ENCODE measurements at regions of chr11 and their contacts with region 1.

Region 1: GRCh38 chr11:64448599-64449556 is 89.9 kb downstream of the RPS6KA4 start:
- DNase-seq: peak; percentile 80
- ATAC-seq: peak; percentile 61
- H3K4me3 ChIP-seq: peak overlapping the region; percentile 52 to 92 (median 55)
- H3K4me3 Mint-ChIP-seq: peak overlapping the region; percentile 94
- H3K27ac ChIP-seq: peak overlapping the region; percentile 39 to 83
- H3K27ac Mint-ChIP-seq: peak overlapping the region; percentile 83
- H3K4me1 ChIP-seq: peaks cover 25 to 34% of the 10 kb centered on the region in 2 donors
- H3K4me1 Mint-ChIP-seq: peaks cover 34% of the 10 kb centered on the region
- H3K27me3 ChIP-seq: no peaks in the 10 kb centered on the region
- H3K27me3 Mint-ChIP-seq: no peaks in the 10 kb centered on the region
- CTCF ChIP-seq: peak; percentile 76

Region 2: GRCh38 chr11:63248987-63249386 is 1199.9 kb before region 1 on chr11:
- CTCF ChIA-PET with region 1: no interaction called
- POLR2A ChIA-PET with region 1: no interaction called
- intact Hi-C with region 1: no loop called
- DNase-seq: no peak
- ATAC-seq: no peak
- H3K4me3 ChIP-seq: no peak overlapping the region
- H3K4me3 Mint-ChIP-seq: no peak overlapping the region
- H3K27ac ChIP-seq: no peak overlapping the region
- H3K27ac Mint-ChIP-seq: no peak overlapping the region
- H3K4me1 ChIP-seq: no peaks in the 10 kb centered on the region
- H3K4me1 Mint-ChIP-seq: no peaks in the 10 kb centered on the region
- H3K27me3 ChIP-seq: peaks cover 0 to 10% (median 8%) of the 10 kb centered on the region in 4 experiments
- H3K27me3 Mint-ChIP-seq: peaks cover 42% of the 10 kb centered on the region
- CTCF ChIP-seq: no peak

Region 3: GRCh38 chr11:64358907-64359711 is 89.8 kb before region 1 on chr11 and contains the start of gene RPS6KA4:
- CTCF ChIA-PET with region 1: interaction called, 8 read pairs
- POLR2A ChIA-PET with region 1: no interaction called
- intact Hi-C with region 1: loop called (anchors 5 kb)
- DNase-seq: peak; percentile 68
- ATAC-seq: peak; percentile 72
- H3K4me3 ChIP-seq: peak within 1 kb of the TSS; percentile 26 to 86 (median 75)
- H3K4me3 Mint-ChIP-seq: peak within 1 kb of the TSS; percentile 94
- H3K27ac ChIP-seq: peak within 1 kb of the TSS; percentile 12 to 46
- H3K27ac Mint-ChIP-seq: peak within 1 kb of the TSS; percentile 81
- H3K4me1 ChIP-seq: peaks cover 27 to 51% of the 10 kb centered on the region in 2 donors
- H3K4me1 Mint-ChIP-seq: peaks cover 43% of the 10 kb centered on the region
- H3K27me3 ChIP-seq: no peaks in the 10 kb centered on the region
- H3K27me3 Mint-ChIP-seq: no peaks in the 10 kb centered on the region
- CTCF ChIP-seq: no peak
- total RNA-seq, gene RPS6KA4: 22.6 and 24.2 TPM in 2 replicates

Region 4: GRCh38 chr11:64419818-64420485 is 28.9 kb before region 1 on chr11:
- CTCF ChIA-PET with region 1: interaction called, 14 read pairs
- POLR2A ChIA-PET with region 1: no interaction called
- intact Hi-C with region 1: no loop called
- DNase-seq: no peak
- ATAC-seq: no peak
- H3K4me3 ChIP-seq: no peak overlapping the region
- H3K4me3 Mint-ChIP-seq: no peak overlapping the region
- H3K27ac ChIP-seq: no peak overlapping the region
- H3K27ac Mint-ChIP-seq: no peak overlapping the region
- H3K4me1 ChIP-seq: no peaks in the 10 kb centered on the region
- H3K4me1 Mint-ChIP-seq: peaks cover 2% of the 10 kb centered on the region
- H3K27me3 ChIP-seq: peaks cover 0 to 7% (median 1%) of the 10 kb centered on the region in 4 experiments
- H3K27me3 Mint-ChIP-seq: peaks cover 26% of the 10 kb centered on the region
- CTCF ChIP-seq: no peak

Region 5: DNA sequence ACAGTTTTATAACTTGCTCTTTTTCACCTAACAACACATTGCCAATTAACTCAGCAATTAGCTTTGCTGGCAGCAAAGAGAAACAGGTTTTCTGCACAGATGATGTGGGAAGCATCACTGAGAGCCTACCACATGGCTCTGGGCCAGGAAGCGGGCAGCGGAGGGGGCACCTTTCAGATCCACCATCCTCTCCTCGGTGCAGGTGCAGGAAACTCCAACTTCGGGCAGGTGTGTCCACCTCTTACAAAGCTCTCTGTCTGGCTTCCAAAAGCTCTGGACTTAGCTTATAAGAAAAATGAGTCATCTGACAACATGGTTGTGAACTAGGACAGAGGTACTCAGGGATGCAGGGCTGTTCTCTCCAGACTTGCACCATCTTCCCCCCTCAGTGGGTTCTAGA is 12.9 kb before region 1 on chr11:
- CTCF ChIA-PET with region 1: interaction called, 25 read pairs
- POLR2A ChIA-PET with region 1: no interaction called
- intact Hi-C with region 1: no loop called
- DNase-seq: no peak
- ATAC-seq: no peak
- H3K4me3 ChIP-seq: no peak overlapping the region
- H3K4me3 Mint-ChIP-seq: no peak overlapping the region
- H3K27ac ChIP-seq: no peak overlapping the region
- H3K27ac Mint-ChIP-seq: no peak overlapping the region
- H3K4me1 ChIP-seq: peaks cover 0 to 4% of the 10 kb centered on the region in 2 donors
- H3K4me1 Mint-ChIP-seq: peaks cover 3% of the 10 kb centered on the region
- H3K27me3 ChIP-seq: peaks cover 0 to 7% (median 1%) of the 10 kb centered on the region in 4 experiments
- H3K27me3 Mint-ChIP-seq: peaks cover 20% of the 10 kb centered on the region
- CTCF ChIP-seq: no peak

Region 6: DNA sequence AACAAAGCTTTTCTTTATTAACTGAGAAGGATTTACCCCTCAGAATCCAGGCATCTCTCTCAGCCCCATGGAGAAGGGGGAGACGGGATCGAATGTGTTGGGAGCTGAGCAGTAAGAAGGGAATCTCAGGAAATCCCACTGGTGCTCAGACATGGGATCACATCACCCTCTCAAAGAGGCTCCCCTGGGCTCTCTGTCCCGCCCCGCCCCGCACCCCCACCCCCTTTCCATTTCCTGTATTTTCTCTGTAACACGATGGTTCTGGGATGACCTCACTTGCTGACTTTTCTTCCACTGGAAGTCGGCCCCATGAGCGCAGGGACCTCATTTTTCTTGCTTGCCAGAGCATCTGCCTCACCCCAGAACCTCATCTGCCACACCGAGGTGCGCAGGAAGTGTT is 10.1 kb after region 1 on chr11:
- CTCF ChIA-PET with region 1: interaction called, 10 read pairs
- POLR2A ChIA-PET with region 1: no interaction called
- intact Hi-C with region 1: no loop called
- DNase-seq: no peak
- ATAC-seq: no peak
- H3K4me3 ChIP-seq: no peak overlapping the region
- H3K4me3 Mint-ChIP-seq: no peak overlapping the region
- H3K27ac ChIP-seq: no peak overlapping the region
- H3K27ac Mint-ChIP-seq: no peak overlapping the region
- H3K4me1 ChIP-seq: no peaks in the 10 kb centered on the region
- H3K4me1 Mint-ChIP-seq: no peaks in the 10 kb centered on the region
- H3K27me3 ChIP-seq: no peaks in the 10 kb centered on the region
- H3K27me3 Mint-ChIP-seq: peaks cover 4% of the 10 kb centered on the region
- CTCF ChIP-seq: no peak

Region 7: DNA sequence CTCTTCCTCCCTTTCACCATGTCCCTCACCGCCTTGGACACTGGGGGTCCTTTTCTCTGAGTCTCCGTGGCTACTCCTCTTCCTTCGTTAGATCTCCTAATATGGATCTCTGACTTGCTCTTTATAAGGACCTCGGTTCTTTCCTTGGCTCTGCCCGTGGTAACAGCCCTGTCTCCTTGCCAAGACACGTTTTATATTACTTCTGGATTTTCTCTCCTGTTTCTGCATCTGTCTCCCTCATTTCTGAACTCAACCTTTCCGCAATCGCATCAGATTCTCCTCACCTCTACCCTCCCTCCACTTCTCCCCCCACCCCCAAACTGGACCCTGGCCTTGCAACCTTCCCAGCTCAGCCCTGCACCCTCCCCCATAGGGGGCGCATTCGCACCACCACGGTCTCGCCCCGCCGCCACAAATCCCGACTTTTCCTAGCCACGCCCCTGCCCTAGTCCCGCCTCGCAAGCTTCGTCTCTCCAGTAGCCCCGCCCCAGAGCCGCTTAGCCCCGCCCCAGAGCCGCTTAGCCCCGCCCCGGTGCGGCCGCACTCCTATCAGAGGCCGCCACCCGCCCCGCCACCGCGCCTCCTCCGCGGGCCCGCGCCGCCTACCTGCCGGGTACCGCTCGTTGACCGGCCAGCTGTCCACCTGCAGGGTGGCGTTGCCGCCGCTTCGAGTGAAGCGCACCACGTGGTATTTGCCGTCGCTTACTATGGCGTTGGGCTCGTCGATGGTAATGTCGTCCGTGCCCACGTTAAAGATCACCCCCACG is 181.1 kb after region 1 on chr11:
- CTCF ChIA-PET with region 1: no interaction called
- POLR2A ChIA-PET with region 1: no interaction called
- intact Hi-C with region 1: no loop called
- DNase-seq: no peak
- ATAC-seq: no peak
- H3K4me3 ChIP-seq: no peak overlapping the region
- H3K4me3 Mint-ChIP-seq: no peak overlapping the region
- H3K27ac ChIP-seq: no peak overlapping the region
- H3K27ac Mint-ChIP-seq: no peak overlapping the region
- H3K4me1 ChIP-seq: peaks cover 6 to 21% of the 10 kb centered on the region in 2 donors
- H3K4me1 Mint-ChIP-seq: peaks cover 26% of the 10 kb centered on the region
- H3K27me3 ChIP-seq: peaks cover 0 to 10% (median 0%) of the 10 kb centered on the region in 4 experiments
- H3K27me3 Mint-ChIP-seq: peaks cover 16% of the 10 kb centered on the region
- CTCF ChIP-seq: no peak

Region 8: DNA sequence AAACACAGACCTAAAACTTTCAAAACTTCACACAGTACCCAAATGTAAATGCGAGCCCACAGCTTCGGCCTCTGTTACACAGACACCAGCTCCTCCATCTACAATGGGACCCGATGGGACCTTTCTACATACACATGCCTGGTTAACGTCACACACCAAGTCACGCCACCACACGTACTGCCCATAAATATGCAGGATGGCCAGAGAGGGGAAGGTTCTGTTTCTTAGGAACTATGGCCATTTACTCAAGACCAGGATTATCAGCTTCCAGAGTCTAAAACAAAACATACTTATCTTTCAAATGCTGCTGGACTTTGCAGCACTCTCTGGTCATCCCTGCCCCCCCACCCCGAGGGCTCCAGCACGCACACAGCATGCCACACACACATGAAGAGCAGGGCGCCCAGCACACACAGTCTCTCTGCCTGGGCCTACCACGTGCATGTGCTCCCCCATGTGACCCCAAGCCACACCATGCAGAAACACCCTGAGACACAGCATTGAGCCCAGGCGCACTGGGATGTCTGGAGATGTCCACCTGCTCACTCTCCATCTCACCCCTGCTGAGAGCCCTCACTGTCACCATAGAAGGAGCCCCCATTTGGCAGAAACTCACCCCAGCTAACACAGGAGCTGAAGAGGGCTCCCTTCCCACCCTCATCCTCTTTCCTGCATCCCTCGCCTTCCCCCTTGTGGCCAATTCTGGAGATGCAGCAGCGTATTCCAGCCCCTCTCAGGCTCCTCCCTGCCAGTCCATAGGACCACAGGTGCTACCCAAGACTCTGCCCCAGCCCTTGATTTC is 203.9 kb after region 1 on chr11:
- CTCF ChIA-PET with region 1: interaction called, 48 read pairs
- POLR2A ChIA-PET with region 1: no interaction called
- intact Hi-C with region 1: no loop called
- DNase-seq: peak; percentile 78
- ATAC-seq: peak; percentile 51
- H3K4me3 ChIP-seq: no peak overlapping the region
- H3K4me3 Mint-ChIP-seq: no peak overlapping the region
- H3K27ac ChIP-seq: no peak overlapping the region
- H3K27ac Mint-ChIP-seq: no peak overlapping the region
- H3K4me1 ChIP-seq: peaks cover 17 to 33% of the 10 kb centered on the region in 2 donors
- H3K4me1 Mint-ChIP-seq: peaks cover 28% of the 10 kb centered on the region
- H3K27me3 ChIP-seq: peaks cover 0 to 4% (median 0%) of the 10 kb centered on the region in 4 experiments
- H3K27me3 Mint-ChIP-seq: peaks cover 3% of the 10 kb centered on the region
- CTCF ChIP-seq: peak; percentile 70

Region 9: GRCh38 chr11:64723117-64723906 is 274.4 kb after region 1 on chr11 and contains the start of gene NRXN2:
- CTCF ChIA-PET with region 1: interaction called, 3 read pairs
- POLR2A ChIA-PET with region 1: interaction called, 6 read pairs
- intact Hi-C with region 1: loop called (anchors 5 kb)
- DNase-seq: peak; percentile 89
- ATAC-seq: peak; percentile 92
- H3K4me3 ChIP-seq: peak within 1 kb of the TSS in 4 of 5 experiments; percentile 67 to 83 (median 76)
- H3K4me3 Mint-ChIP-seq: peak within 1 kb of the TSS; percentile 86
- H3K27ac ChIP-seq: peak within 1 kb of the TSS; percentile 64 to 83
- H3K27ac Mint-ChIP-seq: peak within 1 kb of the TSS; percentile 86
- H3K4me1 ChIP-seq: peaks cover 13 to 23% of the 10 kb centered on the region in 2 donors
- H3K4me1 Mint-ChIP-seq: peaks cover 25% of the 10 kb centered on the region
- H3K27me3 ChIP-seq: peaks cover 0 to 36% (median 10%) of the 10 kb centered on the region in 4 experiments
- H3K27me3 Mint-ChIP-seq: peaks cover 31% of the 10 kb centered on the region
- CTCF ChIP-seq: peak; percentile 99
- total RNA-seq, gene NRXN2: 0.52 TPM in 1 of 2 replicates, not detected in the other